OCI-LY7 (cell line): ENCODE measurements at regions of chr7 and their contacts with region 1.

Region 1: GRCh38 chr7:74633451-74633921 is 24.0 kb upstream of the GTF2I start:
- DNase-seq: no peak
- H3K4me3 ChIP-seq: no peak overlapping the region
- H3K27ac ChIP-seq: no peak overlapping the region
- H3K4me1 ChIP-seq: peaks cover 7% of the 10 kb centered on the region
- CTCF ChIP-seq: no peak

Region 2: DNA sequence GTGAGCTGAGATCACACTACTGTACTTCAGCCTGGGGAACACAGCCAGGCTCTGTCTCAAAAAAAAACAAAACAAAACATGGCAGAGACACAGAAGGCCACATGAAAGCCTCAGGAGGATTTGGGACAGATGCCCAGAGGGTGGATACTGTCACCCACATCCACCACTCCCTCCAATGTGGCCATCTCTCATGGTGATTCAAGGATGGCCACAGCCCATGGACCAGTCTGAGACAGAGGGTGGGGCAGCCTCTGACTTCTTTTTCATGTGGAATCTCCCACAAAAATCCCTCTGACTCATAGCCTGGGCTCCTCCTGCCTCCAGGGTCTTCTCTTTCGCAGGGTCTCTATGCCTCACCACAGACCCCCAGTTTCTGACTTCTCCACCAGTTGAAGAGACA is 34.9 kb before region 1 on chr7:
- CTCF ChIA-PET with region 1: no interaction called
- POLR2A ChIA-PET with region 1: no interaction called
- intact Hi-C with region 1: loop called (anchors 5 kb)
- DNase-seq: no peak
- H3K4me3 ChIP-seq: no peak overlapping the region
- H3K27ac ChIP-seq: no peak overlapping the region
- H3K4me1 ChIP-seq: peaks cover 15% of the 10 kb centered on the region
- CTCF ChIP-seq: no peak